CD4-positive, alpha-beta T cell (primary cell): ENCODE measurements at regions of chr5 and their contacts with region 1.

Region 1: GRCh38 chr5:35233121-35233520 is 2.8 kb upstream of the PRLR start:
- DNase-seq: no peak
- ATAC-seq: no peak
- H3K4me3 ChIP-seq: no peak overlapping the region
- H3K4me3 Mint-ChIP-seq: no peak overlapping the region
- H3K27ac ChIP-seq: no peak overlapping the region
- H3K27ac Mint-ChIP-seq: no peak overlapping the region
- H3K4me1 ChIP-seq: peaks cover 14% of the 10 kb centered on the region
- H3K4me1 Mint-ChIP-seq: peaks cover 17% of the 10 kb centered on the region
- H3K27me3 ChIP-seq: peaks cover 23 to 26% of the 10 kb centered on the region in 2 experiments
- H3K27me3 Mint-ChIP-seq: peaks cover 59% of the 10 kb centered on the region
- CTCF ChIP-seq: no peak

Region 2: GRCh38 chr5:35136386-35136785 is 96.7 kb before region 1 on chr5:
- CTCF ChIA-PET with region 1: no interaction called
- POLR2A ChIA-PET with region 1: no interaction called
- intact Hi-C with region 1: no loop called
- DNase-seq: peak in 2 of 14 experiments; percentile 9 to 48
- ATAC-seq: no peak
- H3K4me3 ChIP-seq: no peak overlapping the region
- H3K4me3 Mint-ChIP-seq: no peak overlapping the region
- H3K27ac ChIP-seq: no peak overlapping the region
- H3K27ac Mint-ChIP-seq: no peak overlapping the region
- H3K4me1 ChIP-seq: no peaks in the 10 kb centered on the region
- H3K4me1 Mint-ChIP-seq: no peaks in the 10 kb centered on the region
- H3K27me3 ChIP-seq: peaks cover 6 to 7% of the 10 kb centered on the region in 2 experiments
- H3K27me3 Mint-ChIP-seq: peaks cover 52% of the 10 kb centered on the region
- CTCF ChIP-seq: no peak

Region 3: DNA sequence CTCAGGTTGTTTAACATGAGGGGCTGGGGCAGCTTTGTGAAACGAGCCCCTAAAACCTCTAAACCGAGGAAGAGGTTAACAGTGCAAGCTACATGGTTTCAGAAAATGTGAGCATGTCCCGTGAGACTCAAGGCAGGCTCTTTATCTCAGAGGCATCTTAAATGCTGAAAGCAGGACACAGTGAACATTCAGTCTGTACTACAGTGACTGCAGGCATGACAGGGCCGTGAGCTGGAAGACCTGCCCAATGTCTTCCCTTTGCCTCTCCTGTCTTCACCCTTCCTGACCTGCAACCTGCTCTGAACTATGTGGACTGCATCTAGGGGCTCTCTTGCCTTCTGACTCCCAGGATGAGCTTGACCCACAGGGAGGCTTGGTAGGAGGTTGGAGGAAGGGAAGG is 61.1 kb before region 1 on chr5:
- CTCF ChIA-PET with region 1: no interaction called
- POLR2A ChIA-PET with region 1: no interaction called
- intact Hi-C with region 1: loop called in 1 of 2 experiments (anchors 2 kb)
- DNase-seq: no peak
- ATAC-seq: no peak
- H3K4me3 ChIP-seq: no peak overlapping the region
- H3K4me3 Mint-ChIP-seq: no peak overlapping the region
- H3K27ac ChIP-seq: no peak overlapping the region
- H3K27ac Mint-ChIP-seq: no peak overlapping the region
- H3K4me1 ChIP-seq: no peaks in the 10 kb centered on the region
- H3K4me1 Mint-ChIP-seq: no peaks in the 10 kb centered on the region
- H3K27me3 ChIP-seq: no peaks in the 10 kb centered on the region
- H3K27me3 Mint-ChIP-seq: peaks cover 7% of the 10 kb centered on the region
- CTCF ChIP-seq: no peak

Region 4: DNA sequence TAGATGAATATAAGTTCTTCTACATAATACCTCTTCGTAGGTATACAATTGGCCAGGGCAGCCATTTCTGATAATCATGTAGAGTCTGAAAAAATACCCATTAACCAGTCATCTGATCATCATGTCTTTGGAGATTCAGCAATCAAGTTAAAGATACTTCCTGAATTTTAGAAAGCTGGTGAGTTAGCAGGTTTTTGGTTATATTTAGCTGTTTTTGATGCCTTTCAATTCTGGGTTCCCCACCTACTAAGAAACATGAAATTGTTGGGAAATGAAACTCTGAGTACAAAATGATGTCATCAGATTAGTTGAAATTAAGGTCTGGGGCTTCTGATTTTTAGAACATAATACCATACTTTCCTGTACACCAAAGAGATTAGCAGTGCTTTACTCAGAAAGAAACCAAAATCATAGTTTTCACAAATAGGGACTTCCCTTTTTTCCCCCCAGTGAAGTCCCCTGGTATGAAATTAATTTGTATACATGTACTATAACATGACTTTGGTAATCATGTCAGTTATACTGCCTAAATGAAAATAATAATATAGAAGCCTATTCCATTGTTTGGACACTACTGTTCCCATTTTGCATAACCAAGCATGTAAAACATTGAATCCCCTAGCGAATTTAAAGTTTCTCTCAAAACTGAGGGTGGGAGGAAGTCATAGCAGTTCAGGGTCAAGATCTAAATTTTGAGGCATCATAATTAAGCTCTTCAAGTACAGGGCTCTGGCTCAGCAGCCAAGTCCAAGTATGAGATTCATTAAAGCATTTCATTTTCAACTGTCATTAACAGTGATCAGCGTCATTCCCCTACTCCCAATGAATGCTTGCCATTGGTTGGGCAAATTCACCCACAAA is 20.8 kb before region 1 on chr5:
- CTCF ChIA-PET with region 1: no interaction called
- POLR2A ChIA-PET with region 1: no interaction called
- intact Hi-C with region 1: no loop called
- DNase-seq: no peak
- ATAC-seq: no peak
- H3K4me3 ChIP-seq: no peak overlapping the region
- H3K4me3 Mint-ChIP-seq: no peak overlapping the region
- H3K27ac ChIP-seq: no peak overlapping the region
- H3K27ac Mint-ChIP-seq: no peak overlapping the region
- H3K4me1 ChIP-seq: no peaks in the 10 kb centered on the region
- H3K4me1 Mint-ChIP-seq: no peaks in the 10 kb centered on the region
- H3K27me3 ChIP-seq: no peaks in the 10 kb centered on the region
- H3K27me3 Mint-ChIP-seq: peaks cover 6% of the 10 kb centered on the region
- CTCF ChIP-seq: no peak